Panc1 (cell line): ENCODE measurements at regions of chr5 and their contacts with region 1.

Region 1: DNA sequence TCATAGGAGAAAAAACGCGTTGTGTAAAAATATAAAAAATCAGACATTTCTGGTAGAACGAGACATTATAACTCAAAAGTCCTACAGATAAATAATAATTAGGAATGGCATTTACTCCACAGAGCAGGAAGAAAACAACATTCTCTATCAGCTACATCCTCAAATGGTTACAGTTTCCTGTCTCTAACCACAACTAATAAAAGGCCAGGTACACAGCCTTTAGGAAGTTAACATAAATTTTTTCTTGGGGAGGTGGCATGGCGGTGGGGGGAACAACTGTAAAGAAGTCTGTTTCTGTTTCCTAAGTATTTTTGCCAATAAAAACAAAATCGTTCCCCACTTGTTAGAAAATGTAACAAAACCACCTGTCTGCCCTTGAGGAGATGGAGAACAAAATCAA is 44.5 kb downstream of the INSYN2B start:
- DNase-seq: no peak
- ATAC-seq: no peak
- H3K4me3 ChIP-seq: no peak overlapping the region
- H3K27ac ChIP-seq: no peak overlapping the region
- H3K4me1 ChIP-seq: no peaks in the 10 kb centered on the region
- H3K27me3 ChIP-seq: no peaks in the 10 kb centered on the region
- CTCF ChIP-seq: no peak

Region 2: DNA sequence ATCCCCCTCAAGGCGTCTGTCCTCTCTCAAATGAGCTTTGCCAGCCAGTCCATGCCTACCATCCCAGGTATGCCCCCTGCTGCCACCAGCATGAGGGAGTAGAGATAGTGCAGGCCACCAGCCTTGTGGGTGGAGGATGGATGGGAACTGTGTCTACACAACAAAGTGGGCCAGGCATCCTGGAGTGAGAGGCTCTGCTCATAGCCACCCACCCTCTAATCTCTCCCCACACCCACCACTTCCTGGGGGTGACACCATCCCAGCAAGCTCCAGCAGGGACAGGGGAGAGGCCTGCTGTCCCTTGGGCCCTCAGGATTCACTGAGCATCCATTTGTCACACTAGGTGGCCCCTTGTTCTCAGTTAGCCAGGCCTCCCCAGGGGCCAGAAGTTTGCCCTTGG is 144.5 kb after region 1 on chr5:
- CTCF ChIA-PET with region 1: no interaction called
- POLR2A ChIA-PET with region 1: interaction called, 10 read pairs
- in situ Hi-C with region 1: no loop called
- intact Hi-C with region 1: no loop called
- DNase-seq: no peak
- ATAC-seq: no peak
- H3K4me3 ChIP-seq: no peak overlapping the region
- H3K27ac ChIP-seq: no peak overlapping the region
- H3K4me1 ChIP-seq: no peaks in the 10 kb centered on the region
- H3K27me3 ChIP-seq: no peaks in the 10 kb centered on the region
- CTCF ChIP-seq: no peak